HCT116 (cell line): ENCODE measurements at regions of chr12 and their contacts with region 1.

Region 1: GRCh38 chr12:77685112-77685511 is 145.6 kb upstream of the NAV3 start:
- DNase-seq: peak; percentile 71
- ATAC-seq: peak; percentile 94
- H3K4me3 ChIP-seq: no peak overlapping the region
- H3K27ac ChIP-seq: no peak overlapping the region
- H3K4me1 ChIP-seq: peaks cover 0 to 3% of the 10 kb centered on the region in 2 experiments; a peak in 1 of 4 replicates
- H3K27me3 ChIP-seq: no peaks in the 10 kb centered on the region
- CTCF ChIP-seq: peak; percentile 62 to 76 (median 70); a peak in 5 of 6 replicates
- POLR2A ChIP-seq: no peak
- RAD21 ChIP-seq: peak; percentile 79

Region 2: DNA sequence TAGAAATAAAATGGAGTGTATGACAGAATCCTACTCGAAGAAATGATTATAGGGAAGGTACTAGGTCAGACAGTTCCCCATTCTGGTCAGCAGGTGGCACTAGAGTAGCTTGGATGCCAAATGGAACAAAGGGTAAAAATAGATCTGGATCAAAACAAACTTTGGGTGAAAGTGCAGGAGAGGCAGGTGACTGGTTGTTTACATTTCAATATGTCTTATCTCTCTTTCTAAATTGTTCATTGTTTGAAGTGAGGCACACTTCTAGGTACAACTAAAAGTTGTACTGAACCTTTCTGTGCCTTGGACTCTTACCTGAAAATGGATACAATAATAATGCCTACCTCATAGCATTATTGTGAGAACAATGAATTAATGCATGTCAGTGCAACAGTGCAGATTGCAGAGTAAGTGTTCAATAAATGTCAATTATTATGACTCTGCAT is 1063.5 kb before region 1 on chr12:
- CTCF ChIA-PET with region 1: no interaction called
- POLR2A ChIA-PET with region 1: no interaction called
- RAD21 ChIA-PET with region 1: no interaction called
- intact Hi-C with region 1: loop called (anchors 5 kb)
- DNase-seq: peak; percentile 44
- ATAC-seq: peak; percentile 88
- H3K4me3 ChIP-seq: no peak overlapping the region
- H3K27ac ChIP-seq: no peak overlapping the region
- H3K4me1 ChIP-seq: peaks cover 2 to 8% of the 10 kb centered on the region in 2 experiments; a peak in 2 of 4 replicates
- H3K27me3 ChIP-seq: no peaks in the 10 kb centered on the region
- CTCF ChIP-seq: peak; percentile 84 to 92 (median 90); a peak in 5 of 6 replicates
- POLR2A ChIP-seq: no peak
- RAD21 ChIP-seq: peak; percentile 97

Region 3: DNA sequence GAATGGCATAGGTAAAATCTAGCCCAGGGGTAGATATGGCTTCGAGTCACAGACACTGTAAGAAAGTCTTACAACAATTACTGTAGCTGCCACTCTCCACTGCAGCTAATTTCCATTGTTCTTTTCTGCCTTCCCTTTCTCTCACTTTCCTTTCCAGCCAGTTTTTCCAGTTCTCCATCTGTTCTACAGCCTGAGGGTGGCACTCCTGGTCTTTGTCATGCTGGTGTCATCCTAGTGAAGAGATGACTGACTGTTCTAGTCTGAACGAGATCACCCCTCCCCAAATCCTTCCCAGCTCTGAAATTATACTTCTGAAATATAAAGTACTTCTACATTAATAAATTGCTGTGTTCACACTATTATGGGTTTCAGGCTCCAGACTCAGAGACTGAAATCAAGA is 732.1 kb before region 1 on chr12:
- CTCF ChIA-PET with region 1: interaction called, 3 read pairs
- POLR2A ChIA-PET with region 1: no interaction called
- RAD21 ChIA-PET with region 1: no interaction called
- intact Hi-C with region 1: loop called (anchors 5 kb)
- DNase-seq: peak; percentile 27
- ATAC-seq: peak; percentile 75
- H3K4me3 ChIP-seq: no peak overlapping the region
- H3K27ac ChIP-seq: no peak overlapping the region
- H3K4me1 ChIP-seq: peaks cover 0 to 8% of the 10 kb centered on the region in 2 experiments; a peak in 1 of 4 replicates
- H3K27me3 ChIP-seq: no peaks in the 10 kb centered on the region
- CTCF ChIP-seq: peak; percentile 13 to 58 (median 41); a peak in 3 of 6 replicates
- POLR2A ChIP-seq: no peak
- RAD21 ChIP-seq: peak; percentile 74

Region 4: DNA sequence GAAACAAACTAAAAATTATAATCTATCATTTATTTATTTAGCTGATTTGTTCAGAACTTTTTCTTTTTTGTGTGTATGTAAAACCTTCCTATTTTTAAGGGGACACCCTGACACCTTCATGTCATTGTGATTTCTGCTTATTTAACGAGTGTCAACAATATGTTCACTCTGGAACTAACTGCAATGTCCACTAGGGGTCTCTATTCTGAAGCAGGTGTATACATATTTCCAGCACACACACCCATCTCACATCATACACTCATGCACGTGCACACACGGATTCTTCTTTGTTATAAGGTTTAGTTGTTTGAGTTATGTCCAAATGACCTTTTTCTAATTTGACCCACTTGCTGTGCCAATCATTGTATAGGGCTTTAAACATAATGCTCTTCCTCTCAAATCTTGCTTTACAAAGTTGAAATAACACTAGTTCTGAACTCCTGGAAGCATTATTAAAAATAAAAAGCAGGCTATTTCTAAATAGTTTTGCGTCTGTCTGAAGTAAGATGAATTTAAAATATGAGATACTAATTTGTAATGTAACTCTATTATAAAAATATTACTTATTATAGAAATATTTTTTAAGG is 635.3 kb before region 1 on chr12:
- CTCF ChIA-PET with region 1: interaction called, 11 read pairs
- POLR2A ChIA-PET with region 1: no interaction called
- RAD21 ChIA-PET with region 1: interaction called in 1 of 2 experiments, 3 read pairs
- intact Hi-C with region 1: loop called (anchors 1 kb)
- DNase-seq: peak; percentile 63
- ATAC-seq: peak; percentile 92
- H3K4me3 ChIP-seq: no peak overlapping the region
- H3K27ac ChIP-seq: no peak overlapping the region
- H3K4me1 ChIP-seq: no peaks in the 10 kb centered on the region
- H3K27me3 ChIP-seq: no peaks in the 10 kb centered on the region
- CTCF ChIP-seq: peak; percentile 57 to 76 (median 71); a peak in 5 of 6 replicates
- POLR2A ChIP-seq: no peak
- RAD21 ChIP-seq: peak; percentile 67

Region 5: GRCh38 chr12:77152623-77153193 is 532.4 kb before region 1 on chr12:
- CTCF ChIA-PET with region 1: interaction called, 33 read pairs
- POLR2A ChIA-PET with region 1: no interaction called
- RAD21 ChIA-PET with region 1: interaction called in 1 of 2 experiments, 4 read pairs
- intact Hi-C with region 1: loop called (anchors 1 kb)
- DNase-seq: peak; percentile 22
- ATAC-seq: peak; percentile 32; the same call in 1 of the 2 replicates
- H3K4me3 ChIP-seq: no peak overlapping the region
- H3K27ac ChIP-seq: no peak overlapping the region
- H3K4me1 ChIP-seq: no peaks in the 10 kb centered on the region
- H3K27me3 ChIP-seq: no peaks in the 10 kb centered on the region
- CTCF ChIP-seq: peak; percentile 50 to 58 (median 51); a peak in 5 of 6 replicates
- POLR2A ChIP-seq: no peak
- RAD21 ChIP-seq: peak; percentile 65

Region 6: GRCh38 chr12:77553976-77554619 is 131.0 kb before region 1 on chr12:
- CTCF ChIA-PET with region 1: no interaction called
- POLR2A ChIA-PET with region 1: no interaction called
- RAD21 ChIA-PET with region 1: no interaction called
- intact Hi-C with region 1: no loop called
- DNase-seq: no peak
- ATAC-seq: no peak
- H3K4me3 ChIP-seq: no peak overlapping the region
- H3K27ac ChIP-seq: no peak overlapping the region
- H3K4me1 ChIP-seq: no peaks in the 10 kb centered on the region
- H3K27me3 ChIP-seq: no peaks in the 10 kb centered on the region
- CTCF ChIP-seq: no peak
- POLR2A ChIP-seq: no peak
- RAD21 ChIP-seq: no peak